MCF 10A (cell line): ENCODE measurements at regions of chr16 and their contacts with region 1.

Region 1: DNA sequence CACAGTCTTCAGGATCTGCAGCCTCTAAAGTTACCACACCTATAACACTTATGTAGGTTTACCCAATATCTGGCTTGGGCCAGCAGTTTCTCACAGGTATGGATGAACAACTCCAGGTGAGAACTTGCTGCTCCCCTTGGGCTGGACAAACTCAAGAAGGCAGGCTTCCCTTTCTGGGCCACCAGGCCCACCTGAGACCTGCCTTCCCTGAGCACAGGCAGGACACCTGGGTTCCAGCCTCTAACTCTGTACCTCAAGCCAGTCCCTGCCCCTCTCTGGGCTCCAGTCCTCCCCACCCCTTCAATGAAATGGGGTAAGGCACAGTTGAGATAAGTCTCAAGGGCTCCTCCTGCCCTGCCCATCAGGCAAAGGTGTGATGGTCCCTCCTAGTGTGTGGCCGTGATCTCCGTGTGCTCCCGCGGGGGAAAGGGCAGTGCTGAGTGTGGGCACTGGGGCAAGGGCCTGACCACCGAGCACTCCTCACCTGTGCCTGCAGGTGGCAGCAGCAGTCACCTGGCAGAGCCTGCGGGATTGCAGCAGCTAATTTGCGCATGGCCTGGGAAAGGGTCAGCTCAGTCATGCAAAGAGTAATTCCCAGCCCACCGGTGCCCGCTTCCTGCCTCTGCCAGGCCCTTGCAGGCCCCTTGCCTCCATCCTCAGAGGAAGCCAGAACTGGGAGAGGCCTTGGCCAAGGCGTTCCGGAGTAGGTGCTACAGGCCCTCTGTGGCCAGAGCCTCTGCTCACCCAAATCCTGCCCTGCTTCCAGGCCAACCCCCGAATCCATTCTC is 28.2 kb upstream of the ADGRG1 start:
- DNase-seq: peak; percentile 70
- H3K4me3 Mint-ChIP-seq: no peak overlapping the region
- H3K27ac Mint-ChIP-seq: no peak overlapping the region
- H3K4me1 Mint-ChIP-seq: no peaks in the 10 kb centered on the region
- H3K27me3 Mint-ChIP-seq: peaks cover 14% of the 10 kb centered on the region
- CTCF ChIP-seq: peak; percentile 73

Region 2: DNA sequence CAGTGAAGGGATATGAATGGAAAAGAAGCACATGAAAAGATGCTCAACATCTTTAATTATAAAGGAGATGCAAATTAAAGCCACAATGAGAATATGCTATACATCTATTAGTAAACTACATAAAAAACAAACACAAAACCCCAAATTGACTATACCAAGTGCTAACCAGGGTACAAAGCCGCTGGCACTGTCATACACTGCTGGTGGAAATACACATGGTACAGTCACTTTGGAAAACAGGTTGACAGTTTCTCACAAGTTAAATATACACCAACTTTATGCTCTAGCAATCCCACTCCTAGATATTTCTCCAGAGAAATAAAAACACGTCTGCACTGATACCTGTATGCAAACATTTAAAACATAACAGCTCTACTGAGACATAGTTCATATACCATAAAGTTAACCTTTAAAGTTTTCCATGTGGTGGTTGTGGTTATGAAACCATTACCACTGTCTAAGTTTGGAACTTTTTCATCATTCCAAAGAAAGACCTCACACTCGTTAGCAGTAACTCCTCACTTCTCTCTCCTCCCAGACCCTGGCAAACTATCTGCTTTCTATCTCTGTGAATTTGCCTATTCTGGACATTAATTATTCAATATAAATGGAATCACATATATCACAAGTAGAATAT is 15.1 kb before region 1 on chr16:
- CTCF ChIA-PET with region 1: interaction called, 34 read pairs
- POLR2A ChIA-PET with region 1: no interaction called
- intact Hi-C with region 1: no loop called
- DNase-seq: no peak
- H3K4me3 Mint-ChIP-seq: no peak overlapping the region
- H3K27ac Mint-ChIP-seq: no peak overlapping the region
- H3K4me1 Mint-ChIP-seq: no peaks in the 10 kb centered on the region
- H3K27me3 Mint-ChIP-seq: peaks cover under 1% of the 10 kb centered on the region
- CTCF ChIP-seq: no peak

Region 3: DNA sequence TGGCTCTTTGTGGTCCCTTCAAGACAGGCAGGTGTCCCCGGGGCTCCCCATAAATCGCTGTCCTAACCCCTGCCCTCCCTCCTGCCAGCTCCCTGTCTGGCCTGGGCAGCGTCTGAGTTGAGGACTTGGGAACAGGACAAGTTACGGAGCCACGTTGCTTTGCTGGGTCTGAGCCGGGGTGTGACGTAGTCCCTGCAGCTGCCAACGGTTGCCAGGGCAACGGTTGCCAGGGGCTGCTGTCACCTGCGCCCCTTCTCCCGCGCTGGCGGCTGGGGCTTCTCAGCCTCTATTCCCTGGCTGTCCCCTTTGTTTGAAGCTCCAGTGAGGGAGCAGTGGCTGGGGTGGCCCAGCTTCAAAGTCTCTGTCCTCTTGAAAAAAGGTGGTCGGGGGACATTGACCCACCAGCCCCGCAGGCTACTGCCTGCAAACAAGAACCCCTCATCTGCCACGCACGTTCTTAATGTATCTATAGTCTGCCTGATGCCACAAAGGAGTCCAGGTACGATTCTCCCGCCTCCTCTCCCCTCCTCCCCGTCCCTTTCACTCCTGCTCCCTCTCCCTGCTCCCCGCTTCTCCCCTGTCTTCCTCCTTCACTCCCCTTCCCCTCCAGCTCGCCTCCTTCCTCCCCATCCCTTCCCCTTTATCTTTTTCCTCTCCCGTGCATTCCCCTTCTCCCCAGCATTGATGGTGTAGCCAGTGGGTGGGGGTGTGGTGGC is 39.1 kb after region 1 on chr16:
- CTCF ChIA-PET with region 1: interaction called, 16 read pairs
- POLR2A ChIA-PET with region 1: no interaction called
- intact Hi-C with region 1: no loop called
- DNase-seq: no peak
- H3K4me3 Mint-ChIP-seq: no peak overlapping the region
- H3K27ac Mint-ChIP-seq: no peak overlapping the region
- H3K4me1 Mint-ChIP-seq: peaks cover 13% of the 10 kb centered on the region
- H3K27me3 Mint-ChIP-seq: no peaks in the 10 kb centered on the region
- CTCF ChIP-seq: no peak

Region 4: DNA sequence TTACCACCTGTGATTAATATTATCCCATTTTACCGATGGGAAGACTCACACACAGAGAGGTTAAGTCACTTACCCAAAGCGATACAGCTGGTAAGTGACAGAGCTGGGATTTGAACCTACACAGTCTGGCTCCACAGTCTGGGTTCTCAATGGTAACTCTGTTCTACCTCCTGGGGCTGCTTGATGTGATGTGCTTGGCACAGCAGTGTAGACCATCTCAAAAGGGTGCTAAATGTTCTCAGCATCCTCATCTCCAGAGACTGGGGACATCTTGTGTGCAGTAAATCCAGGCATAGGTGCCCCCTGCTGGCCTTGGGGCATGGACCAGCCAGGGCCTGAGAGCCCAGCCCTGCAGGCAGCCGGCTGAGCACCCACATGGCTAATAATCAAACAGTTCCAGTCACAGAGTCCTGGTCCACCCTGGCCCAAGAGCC is 119.9 kb after region 1 on chr16:
- CTCF ChIA-PET with region 1: no interaction called
- POLR2A ChIA-PET with region 1: no interaction called
- intact Hi-C with region 1: loop called (anchors 1 kb)
- DNase-seq: peak; percentile 69
- H3K4me3 Mint-ChIP-seq: no peak overlapping the region
- H3K27ac Mint-ChIP-seq: no peak overlapping the region
- H3K4me1 Mint-ChIP-seq: no peaks in the 10 kb centered on the region
- H3K27me3 Mint-ChIP-seq: peaks cover 1% of the 10 kb centered on the region
- CTCF ChIP-seq: peak; percentile 64